GM12878 (cell line): ENCODE measurements at regions of chr14 and their contacts with region 1.

Region 1: GRCh38 chr14:50823051-50823761 is 7.8 kb downstream of the NIN start:
- DNase-seq: peak; percentile 39
- ATAC-seq: peak; percentile 38
- H3K4me3 ChIP-seq: peak overlapping the region; percentile 74
- H3K27ac ChIP-seq: peak overlapping the region; percentile 88
- H3K4me1 ChIP-seq: peaks cover 37% of the 10 kb centered on the region
- H3K27me3 ChIP-seq: no peaks in the 10 kb centered on the region
- CTCF ChIP-seq: no peak
- EP300 ChIP-seq: no peak
- POLR2A ChIP-seq: no peak; the same call in 1 of the 2 replicates
- RAD21 ChIP-seq: no peak

Region 2: GRCh38 chr14:49620182-49621113 is 1202.8 kb before region 1 on chr14 and contains the starts of genes MGAT2 and RPL36AL:
- CTCF ChIA-PET with region 1: no interaction called
- POLR2A ChIA-PET with region 1: no interaction called
- RAD21 ChIA-PET with region 1: interaction called, 3 read pairs
- SMC1A ChIA-PET with region 1: no interaction called
- in situ Hi-C with region 1: loop called (anchors 10 kb)
- intact Hi-C with region 1: no loop called
- DNase-seq: peak; percentile 97
- ATAC-seq: peak; percentile 92
- H3K4me3 ChIP-seq: peak within 1 kb of the TSS; percentile 92
- H3K27ac ChIP-seq: peak within 1 kb of the TSS; percentile 98
- H3K4me1 ChIP-seq: no peaks in the 10 kb centered on the region; the same call in 1 of the 2 replicates
- H3K27me3 ChIP-seq: no peaks in the 10 kb centered on the region
- CTCF ChIP-seq: peak; percentile 13 to 45 (median 21); a peak in 3 of 6 replicates
- EP300 ChIP-seq: no peak; a peak in 1 of 4 replicates
- POLR2A ChIP-seq: peak; percentile 99
- RAD21 ChIP-seq: no peak
- polyA plus RNA-seq, gene MGAT2: 0.03 TPM in 1 of 2 experiments, not detected in the other
- polyA plus RNA-seq, gene RPL36AL: 1,365 to 1,379 TPM

Region 3: DNA sequence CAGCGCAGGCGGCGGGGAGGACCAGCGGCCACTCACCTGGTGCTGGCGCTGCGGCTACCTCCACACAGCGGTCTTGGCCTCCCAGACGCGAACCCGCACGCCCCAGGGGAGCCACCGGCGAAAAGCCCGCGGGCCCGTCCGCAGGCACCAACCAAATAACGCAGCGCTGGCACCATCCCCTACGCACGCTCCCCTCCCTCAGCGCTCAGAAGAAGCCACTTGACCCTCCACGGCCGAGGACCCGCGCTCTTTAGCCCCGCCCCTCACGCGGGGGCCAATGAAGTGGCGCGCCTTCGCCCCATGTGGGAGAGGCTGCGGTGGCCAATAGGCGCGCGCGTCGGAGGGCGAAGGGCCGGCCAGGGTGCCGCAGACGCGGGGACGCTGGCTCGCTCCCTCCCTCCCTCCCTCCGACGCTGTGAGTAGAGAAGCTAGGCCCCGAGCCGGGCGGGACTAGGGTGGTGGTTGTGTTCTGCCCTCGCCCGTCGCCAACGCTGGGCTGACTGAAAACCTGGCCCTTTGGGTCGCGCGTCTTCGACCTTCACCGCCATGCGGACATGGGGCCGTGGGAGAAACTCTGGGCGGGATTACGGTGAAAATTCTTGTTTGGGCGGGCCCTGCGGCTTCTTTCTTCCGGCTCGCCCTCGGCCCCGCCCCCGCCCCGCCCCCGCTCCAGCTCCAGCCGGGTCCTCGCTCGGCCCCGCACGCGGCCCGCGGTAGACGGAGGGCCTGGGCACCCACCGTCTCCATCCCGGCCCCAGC is 511.1 kb before region 1 on chr14 and contains the starts of genes DMAC2L and L2HGDH:
- CTCF ChIA-PET with region 1: no interaction called
- POLR2A ChIA-PET with region 1: no interaction called
- RAD21 ChIA-PET with region 1: no interaction called
- SMC1A ChIA-PET with region 1: no interaction called
- in situ Hi-C with region 1: no loop called
- intact Hi-C with region 1: loop called (anchors 10 kb)
- DNase-seq: peak; percentile 74
- ATAC-seq: peak; percentile 97
- H3K4me3 ChIP-seq: peak within 1 kb of the TSS; percentile 97
- H3K27ac ChIP-seq: peak within 1 kb of the TSS; percentile 85
- H3K4me1 ChIP-seq: peaks cover 4% of the 10 kb centered on the region; the same call in 1 of the 2 replicates
- H3K27me3 ChIP-seq: no peaks in the 10 kb centered on the region
- CTCF ChIP-seq: no peak; a peak in 1 of 6 replicates
- EP300 ChIP-seq: no peak
- POLR2A ChIP-seq: peak; percentile 97
- RAD21 ChIP-seq: no peak
- polyA plus RNA-seq, gene DMAC2L: 63.7 to 76.3 TPM
- polyA plus RNA-seq, gene L2HGDH: 2.6 to 3.0 TPM

Region 4: GRCh38 chr14:50785457-50786063 is 37.6 kb before region 1 on chr14:
- CTCF ChIA-PET with region 1: interaction called, 76 read pairs
- POLR2A ChIA-PET with region 1: interaction called, 7 read pairs
- RAD21 ChIA-PET with region 1: interaction called, 91 read pairs
- SMC1A ChIA-PET with region 1: interaction called, 360 read pairs
- in situ Hi-C with region 1: no loop called
- intact Hi-C with region 1: loop called (anchors 2 kb)
- DNase-seq: no peak
- ATAC-seq: no peak
- H3K4me3 ChIP-seq: no peak overlapping the region
- H3K27ac ChIP-seq: peak overlapping the region; percentile 5
- H3K4me1 ChIP-seq: peaks cover 59% of the 10 kb centered on the region
- H3K27me3 ChIP-seq: no peaks in the 10 kb centered on the region
- CTCF ChIP-seq: no peak
- EP300 ChIP-seq: no peak
- POLR2A ChIP-seq: no peak
- RAD21 ChIP-seq: no peak

Region 5: GRCh38 chr14:50839048-50839447 is 15.8 kb after region 1 on chr14:
- CTCF ChIA-PET with region 1: interaction called, 3 read pairs
- POLR2A ChIA-PET with region 1: interaction called, 8 read pairs
- RAD21 ChIA-PET with region 1: interaction called, 8 read pairs
- SMC1A ChIA-PET with region 1: interaction called, 16 read pairs
- in situ Hi-C with region 1: no loop called
- intact Hi-C with region 1: no loop called
- DNase-seq: no peak
- ATAC-seq: peak; percentile 66
- H3K4me3 ChIP-seq: no peak overlapping the region
- H3K27ac ChIP-seq: no peak overlapping the region
- H3K4me1 ChIP-seq: peaks cover 20% of the 10 kb centered on the region
- H3K27me3 ChIP-seq: no peaks in the 10 kb centered on the region
- CTCF ChIP-seq: no peak
- EP300 ChIP-seq: no peak
- POLR2A ChIP-seq: no peak
- RAD21 ChIP-seq: no peak